Panc1 (cell line): ENCODE measurements at regions of chr14 and their contacts with region 1.

Region 1: GRCh38 chr14:103094406-103095209 is at the start of gene EXOC3L4:
- DNase-seq: no peak
- ATAC-seq: no peak
- H3K4me3 ChIP-seq: no peak within 1 kb of the TSS
- H3K27ac ChIP-seq: no peak within 1 kb of the TSS
- H3K4me1 ChIP-seq: peaks cover 7% of the 10 kb centered on the region; the same call in 1 of the 2 replicates
- H3K27me3 ChIP-seq: no peaks in the 10 kb centered on the region
- CTCF ChIP-seq: no peak
- total RNA-seq, gene EXOC3L4: 2.6 TPM

Region 2: GRCh38 chr14:103033681-103034096 is 60.9 kb before region 1 on chr14:
- CTCF ChIA-PET with region 1: interaction called, 12 read pairs
- POLR2A ChIA-PET with region 1: no interaction called
- in situ Hi-C with region 1: no loop called
- intact Hi-C with region 1: no loop called
- DNase-seq: no peak
- ATAC-seq: peak; percentile 92
- H3K4me3 ChIP-seq: peak overlapping the region in 1 of 2 experiments; percentile 29; a peak in 2 of 4 replicates
- H3K27ac ChIP-seq: peak overlapping the region; percentile 87
- H3K4me1 ChIP-seq: peaks cover 44% of the 10 kb centered on the region
- H3K27me3 ChIP-seq: no peaks in the 10 kb centered on the region
- CTCF ChIP-seq: no peak